Mucosa of descending colon (tissue), 3 donors: ENCODE measurements at regions of chrX and their contacts with region 1.

Region 1: DNA sequence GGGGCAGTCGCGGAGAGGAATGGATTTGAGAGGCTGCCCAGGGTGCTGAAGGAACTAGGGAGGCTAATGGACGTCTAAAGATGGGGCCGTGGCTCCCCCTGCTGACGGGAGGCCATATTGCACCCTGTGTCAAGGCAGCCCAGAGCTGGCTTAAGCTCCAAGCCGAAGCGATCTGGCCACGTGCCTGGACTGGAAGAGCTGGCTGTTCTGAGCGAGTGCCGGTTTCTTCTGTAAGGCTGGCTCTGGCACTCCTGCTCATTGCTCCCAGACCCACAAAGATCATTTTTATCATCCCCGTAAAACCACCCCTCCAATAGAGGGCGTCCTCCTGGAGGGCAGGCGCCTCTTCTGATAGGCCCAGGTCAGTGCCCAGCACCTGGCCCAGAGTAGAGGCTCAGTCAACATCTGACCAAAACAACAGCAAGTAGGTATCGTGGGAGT is 5.6 kb downstream of the PNCK start:
- DNase-seq: peak; percentile 76 to 85 (median 82)
- ATAC-seq: peak; percentile 90
- H3K4me3 ChIP-seq: no peak overlapping the region
- H3K4me1 ChIP-seq: no peaks in the 10 kb centered on the region
- CTCF ChIP-seq: peak; percentile 46

Region 2: GRCh38 chrX:153554519-153555167 is 113.3 kb before region 1 on chrX:
- intact Hi-C with region 1: loop called in 1 of 2 experiments (anchors 10 kb)
- DNase-seq: peak in 2 of 3 donors; percentile 75
- ATAC-seq: peak; percentile 82
- H3K4me3 ChIP-seq: no peak overlapping the region
- H3K4me1 ChIP-seq: no peaks in the 10 kb centered on the region
- CTCF ChIP-seq: peak; percentile 21

Region 3: GRCh38 chrX:153818571-153819383 is 150.8 kb after region 1 on chrX:
- intact Hi-C with region 1: no loop called
- DNase-seq: peak in 2 of 3 donors; percentile 49 to 50
- ATAC-seq: peak; percentile 80
- H3K4me3 ChIP-seq: no peak overlapping the region
- H3K4me1 ChIP-seq: no peaks in the 10 kb centered on the region
- CTCF ChIP-seq: no peak